Aorta (tissue), 5 donors: ENCODE measurements at regions of chr1 and their contacts with region 1.

Region 1: GRCh38 chr1:66542811-66543767 is 9.1 kb downstream of the SGIP1 start:
- DNase-seq: peak; percentile 71 to 88
- ATAC-seq: peak; percentile 90
- H3K4me3 ChIP-seq: no peak overlapping the region
- H3K27ac ChIP-seq: peak overlapping the region; percentile 81 to 99
- H3K4me1 ChIP-seq: peaks cover 10 to 22% of the 10 kb centered on the region in 2 donors
- H3K27me3 ChIP-seq: no peaks in the 10 kb centered on the region

Region 2: GRCh38 chr1:66033781-66034180 is 509.3 kb before region 1 on chr1:
- intact Hi-C with region 1: no loop called
- DNase-seq: no peak
- ATAC-seq: no peak
- H3K4me3 ChIP-seq: no peak overlapping the region
- H3K27ac ChIP-seq: no peak overlapping the region
- H3K4me1 ChIP-seq: no peaks in the 10 kb centered on the region
- H3K27me3 ChIP-seq: no peaks in the 10 kb centered on the region

Region 3: GRCh38 chr1:66350001-66350547 is 193.0 kb before region 1 on chr1:
- intact Hi-C with region 1: no loop called
- DNase-seq: peak in 1 of 2 donors; percentile 62
- ATAC-seq: peak; percentile 40
- H3K4me3 ChIP-seq: no peak overlapping the region
- H3K27ac ChIP-seq: no peak overlapping the region
- H3K4me1 ChIP-seq: peaks cover 0 to 4% of the 10 kb centered on the region in 2 donors
- H3K27me3 ChIP-seq: no peaks in the 10 kb centered on the region

Region 4: DNA sequence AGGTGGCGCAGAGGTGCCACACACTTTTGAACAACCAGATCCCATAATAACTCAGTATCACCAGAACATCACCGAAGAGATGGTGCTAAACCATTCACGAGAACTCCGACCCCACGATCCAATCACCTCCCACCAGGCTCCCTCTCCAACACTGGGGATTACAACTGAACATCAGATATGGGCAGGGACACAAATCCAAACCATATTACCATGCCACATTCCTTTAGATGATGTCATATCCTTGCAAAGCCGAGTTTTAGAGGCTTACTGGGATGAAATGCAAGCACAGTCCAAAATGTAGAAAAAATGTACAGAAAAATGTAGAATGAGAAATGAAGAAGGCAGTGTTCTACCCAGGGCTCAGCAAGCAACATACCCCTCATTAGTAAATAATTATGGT is 55.6 kb after region 1 on chr1:
- intact Hi-C with region 1: loop called (anchors 10 kb)
- DNase-seq: no peak
- ATAC-seq: no peak
- H3K4me3 ChIP-seq: no peak overlapping the region
- H3K27ac ChIP-seq: no peak overlapping the region
- H3K4me1 ChIP-seq: no peaks in the 10 kb centered on the region
- H3K27me3 ChIP-seq: no peaks in the 10 kb centered on the region

Region 5: GRCh38 chr1:66676613-66677298 is 133.7 kb after region 1 on chr1:
- intact Hi-C with region 1: loop called (anchors 5 kb)
- DNase-seq: no peak
- ATAC-seq: peak; percentile 80
- H3K4me3 ChIP-seq: no peak overlapping the region
- H3K27ac ChIP-seq: peak overlapping the region; percentile 40 to 96
- H3K4me1 ChIP-seq: peaks cover 5 to 6% of the 10 kb centered on the region in 2 donors
- H3K27me3 ChIP-seq: no peaks in the 10 kb centered on the region

Region 6: DNA sequence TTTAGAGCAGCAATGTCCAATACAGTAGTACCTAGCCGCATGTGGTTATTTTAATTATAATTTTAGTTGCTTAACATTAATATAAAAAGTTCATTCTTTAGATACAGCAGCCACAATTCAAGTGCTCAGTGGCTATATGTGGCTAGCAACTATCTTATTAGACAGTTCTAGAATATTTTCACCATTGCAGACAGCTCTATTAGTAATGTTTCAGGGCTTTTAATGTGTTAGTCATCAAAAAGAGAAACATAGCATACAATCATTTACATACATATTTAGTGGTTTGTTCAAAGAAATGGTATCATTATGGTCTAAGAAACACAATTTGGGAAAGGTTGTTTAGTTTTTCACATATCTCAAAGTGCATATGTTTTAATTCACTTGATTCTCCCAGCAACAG is 142.6 kb after region 1 on chr1:
- intact Hi-C with region 1: loop called in 1 of 2 experiments (anchors 5 kb)
- DNase-seq: no peak
- ATAC-seq: no peak
- H3K4me3 ChIP-seq: no peak overlapping the region
- H3K27ac ChIP-seq: peak overlapping the region in 1 of 2 donors; percentile 93
- H3K4me1 ChIP-seq: peaks cover 6 to 8% of the 10 kb centered on the region in 2 donors
- H3K27me3 ChIP-seq: no peaks in the 10 kb centered on the region